CD8-positive, alpha-beta memory T cell (primary cell): ENCODE measurements at regions of chr1 and their contacts with region 1.

Region 1: DNA sequence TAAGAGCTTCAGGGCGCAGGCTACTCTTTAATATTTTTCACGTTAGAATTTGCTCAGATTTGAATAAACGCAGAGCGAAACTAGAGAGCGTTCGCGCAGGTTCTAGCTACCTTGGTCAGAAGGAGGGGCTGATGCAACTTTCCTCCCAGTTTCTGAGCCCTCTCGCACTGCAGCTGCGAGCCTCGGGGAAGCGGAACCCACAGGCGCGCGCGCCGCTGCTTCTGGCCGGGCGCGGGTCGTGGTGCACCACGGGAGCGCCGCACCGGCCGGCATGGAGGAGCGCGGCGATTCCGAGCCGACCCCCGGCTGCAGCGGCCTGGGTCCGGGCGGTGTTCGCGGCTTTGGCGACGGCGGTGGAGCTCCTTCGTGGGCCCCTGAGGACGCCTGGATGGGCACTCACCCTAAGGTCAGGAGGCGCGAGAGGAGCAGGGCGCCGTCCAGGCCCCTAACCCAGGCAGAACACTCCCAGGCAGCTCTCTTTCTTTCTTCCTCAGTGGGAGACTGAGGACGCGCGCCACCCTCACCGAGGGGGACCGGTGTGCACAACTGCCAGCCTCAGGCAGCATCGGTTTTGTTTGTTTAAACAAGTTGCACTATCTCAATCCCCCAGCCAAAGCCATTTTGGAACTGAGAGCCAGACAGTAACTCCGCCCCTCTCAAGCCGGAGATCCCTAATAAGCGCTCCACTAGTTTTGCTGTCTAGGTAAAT is at the start of gene TSEN15:
- DNase-seq: peak; percentile 47 to 77 (median 65)
- H3K4me3 ChIP-seq: peak within 1 kb of the TSS; percentile 70
- H3K4me3 Mint-ChIP-seq: peak within 1 kb of the TSS; percentile 91 to 99 (median 98)
- H3K27ac ChIP-seq: peak within 1 kb of the TSS; percentile 81
- H3K27ac Mint-ChIP-seq: peak within 1 kb of the TSS; percentile 89 to 98 (median 96)
- H3K4me1 ChIP-seq: peaks cover 31% of the 10 kb centered on the region
- H3K4me1 Mint-ChIP-seq: peaks cover 35 to 56% (median 54%) of the 10 kb centered on the region in 3 donors
- H3K27me3 ChIP-seq: no peaks in the 10 kb centered on the region
- H3K27me3 Mint-ChIP-seq: peaks cover 12 to 13% of the 10 kb centered on the region in 2 donors
- total RNA-seq, gene TSEN15: 44.4 to 44.8 TPM

Region 2: GRCh38 chr1:183956559-183957188 is 95.0 kb before region 1 on chr1:
- CTCF ChIA-PET with region 1: interaction called, 16 read pairs
- POLR2A ChIA-PET with region 1: interaction called, 5 read pairs
- DNase-seq: peak; percentile 15 to 71 (median 69)
- H3K4me3 ChIP-seq: no peak overlapping the region
- H3K4me3 Mint-ChIP-seq: peak overlapping the region in 6 of 7 donors; percentile 24 to 66 (median 45)
- H3K27ac ChIP-seq: peak overlapping the region; percentile 45
- H3K27ac Mint-ChIP-seq: no peak overlapping the region
- H3K4me1 ChIP-seq: peaks cover 33% of the 10 kb centered on the region
- H3K4me1 Mint-ChIP-seq: peaks cover 7 to 14% (median 9%) of the 10 kb centered on the region in 3 donors
- H3K27me3 ChIP-seq: no peaks in the 10 kb centered on the region
- H3K27me3 Mint-ChIP-seq: no peaks in the 10 kb centered on the region

Region 3: DNA sequence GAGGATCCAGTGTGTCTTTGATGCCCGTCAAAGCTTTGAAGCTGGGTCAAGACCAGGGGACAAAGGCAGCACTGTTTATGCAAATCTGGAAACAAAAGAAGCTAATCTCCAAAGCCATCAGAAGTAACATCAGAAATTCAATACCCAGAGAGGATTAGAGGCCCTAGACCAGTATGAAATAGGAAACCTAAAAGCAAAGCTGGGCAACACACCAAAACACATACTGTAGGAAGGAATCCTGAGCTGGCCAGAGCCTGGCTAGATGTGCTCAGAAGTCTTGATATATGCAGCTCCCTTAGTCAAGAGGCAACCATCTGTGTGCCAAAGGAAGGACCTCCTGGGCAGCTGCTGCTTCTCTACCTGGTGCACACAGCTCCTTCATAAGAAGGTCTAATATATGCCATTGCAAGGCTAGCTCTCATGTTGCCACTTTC is 26.4 kb before region 1 on chr1:
- CTCF ChIA-PET with region 1: no interaction called
- POLR2A ChIA-PET with region 1: no interaction called
- DNase-seq: no peak
- H3K4me3 ChIP-seq: no peak overlapping the region
- H3K4me3 Mint-ChIP-seq: no peak overlapping the region
- H3K27ac ChIP-seq: no peak overlapping the region
- H3K27ac Mint-ChIP-seq: no peak overlapping the region
- H3K4me1 ChIP-seq: no peaks in the 10 kb centered on the region
- H3K4me1 Mint-ChIP-seq: no peaks in the 10 kb centered on the region
- H3K27me3 ChIP-seq: peaks cover 3% of the 10 kb centered on the region
- H3K27me3 Mint-ChIP-seq: peaks cover 0 to 6% of the 10 kb centered on the region in 2 donors

Region 4: GRCh38 chr1:184152434-184152898 is 100.8 kb after region 1 on chr1:
- CTCF ChIA-PET with region 1: no interaction called
- POLR2A ChIA-PET with region 1: no interaction called
- DNase-seq: no peak
- H3K4me3 ChIP-seq: no peak overlapping the region
- H3K4me3 Mint-ChIP-seq: peak overlapping the region in 6 of 7 donors; percentile 33 to 76 (median 55)
- H3K27ac ChIP-seq: no peak overlapping the region
- H3K27ac Mint-ChIP-seq: no peak overlapping the region
- H3K4me1 ChIP-seq: peaks cover 7% of the 10 kb centered on the region
- H3K4me1 Mint-ChIP-seq: peaks cover 13 to 14% (median 14%) of the 10 kb centered on the region in 3 donors
- H3K27me3 ChIP-seq: peaks cover 11% of the 10 kb centered on the region
- H3K27me3 Mint-ChIP-seq: peaks cover 22 to 47% of the 10 kb centered on the region in 2 donors

Region 5: GRCh38 chr1:184433956-184434502 is 382.4 kb after region 1 on chr1:
- CTCF ChIA-PET with region 1: no interaction called
- POLR2A ChIA-PET with region 1: no interaction called
- DNase-seq: no peak
- H3K4me3 ChIP-seq: no peak overlapping the region
- H3K4me3 Mint-ChIP-seq: no peak overlapping the region
- H3K27ac ChIP-seq: no peak overlapping the region
- H3K27ac Mint-ChIP-seq: no peak overlapping the region
- H3K4me1 ChIP-seq: no peaks in the 10 kb centered on the region
- H3K4me1 Mint-ChIP-seq: peaks cover 0 to 2% (median 0%) of the 10 kb centered on the region in 3 donors
- H3K27me3 ChIP-seq: no peaks in the 10 kb centered on the region
- H3K27me3 Mint-ChIP-seq: peaks cover 0 to 9% of the 10 kb centered on the region in 2 donors